ENCODE measurements at regions of chr18 and their contacts with region 1.

Region 1: GRCh38 chr18:23452728-23453679 is at the start of gene RIOK3:
- DNase-seq: peak; percentile 97 to 98
- ATAC-seq: peak; percentile 99
- H3K4me3 ChIP-seq: peak within 1 kb of the TSS; percentile 75 to 98 (median 92)
- H3K27ac ChIP-seq: peak within 1 kb of the TSS; percentile 52 to 96 (median 92)
- H3K4me1 ChIP-seq: peaks cover 7 to 57% (median 40%) of the 10 kb centered on the region in 9 donors
- H3K27me3 ChIP-seq: no peaks in the 10 kb centered on the region
- CTCF ChIP-seq: no peak
- total RNA-seq, gene RIOK3: 51.5 to 74.6 (median 63.5) TPM

Region 2: GRCh38 chr18:22207021-22207758 is 1245.8 kb before region 1 on chr18:
- intact Hi-C with region 1: loop called in 1 of 10 experiments (anchors 5 kb)
- DNase-seq: no peak
- ATAC-seq: peak in 7 of 8 donors; percentile 29 to 83 (median 56)
- H3K4me3 ChIP-seq: no peak overlapping the region
- H3K27ac ChIP-seq: peak overlapping the region in 8 of 10 donors; percentile 12 to 70 (median 51)
- H3K4me1 ChIP-seq: peaks cover 13 to 72% (median 48%) of the 10 kb centered on the region in 9 donors
- H3K27me3 ChIP-seq: no peaks in the 10 kb centered on the region
- CTCF ChIP-seq: no peak

Region 3: DNA sequence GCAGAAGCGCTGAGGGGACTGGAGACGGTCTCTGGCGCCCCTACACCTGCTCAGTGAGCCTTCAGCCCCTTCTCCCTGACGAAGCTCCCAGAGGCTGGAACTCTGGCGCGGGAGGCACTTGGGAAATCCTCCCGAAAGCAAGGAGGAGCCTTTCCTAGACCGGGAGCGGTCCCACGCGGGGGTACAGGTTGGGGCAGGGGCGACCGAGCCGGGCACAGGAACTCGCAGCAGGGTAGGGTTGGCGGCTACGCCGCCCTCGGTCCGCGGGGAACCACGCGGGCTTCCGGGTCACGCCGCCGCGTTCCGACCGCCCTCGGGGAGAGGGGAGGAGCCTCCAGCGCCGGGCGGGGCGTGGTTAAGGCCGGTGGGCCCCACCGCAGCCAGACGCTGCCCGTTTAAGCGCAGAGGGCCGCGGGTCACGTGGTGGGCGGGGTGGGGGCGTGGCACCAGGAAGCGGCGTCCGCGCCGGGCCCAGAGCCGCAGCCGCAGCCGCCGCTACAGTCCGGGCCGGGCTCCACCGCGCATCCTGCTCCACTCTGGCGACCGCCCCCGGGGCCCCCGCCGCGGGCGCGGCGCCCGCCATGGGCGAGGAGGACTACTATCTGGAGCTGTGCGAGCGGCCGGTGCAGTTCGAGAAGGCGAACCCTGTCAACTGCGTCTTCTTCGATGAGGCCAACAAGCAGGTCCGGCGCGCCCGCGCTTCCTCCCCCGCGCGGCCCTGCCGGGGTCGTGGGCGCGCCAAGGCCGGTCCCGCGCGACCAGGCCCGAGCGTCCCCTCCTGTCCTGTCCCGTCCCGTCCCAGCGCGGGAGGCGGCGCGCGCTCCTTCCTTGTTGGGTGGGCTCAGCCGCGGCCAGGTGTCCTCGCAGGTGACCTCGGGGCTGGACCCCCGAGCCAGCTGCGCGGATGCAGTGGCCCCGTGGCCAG is 50.3 kb after region 1 on chr18 and contains the start of gene RMC1:
- intact Hi-C with region 1: loop called in 4 of 10 experiments (anchors 1 to 5 kb)
- DNase-seq: peak; percentile 97 to 99
- ATAC-seq: peak; percentile 98 to 99 (median 99)
- H3K4me3 ChIP-seq: peak within 1 kb of the TSS; percentile 85 to 99 (median 96)
- H3K27ac ChIP-seq: peak within 1 kb of the TSS; percentile 57 to 96 (median 94)
- H3K4me1 ChIP-seq: peaks cover 0 to 44% (median 28%) of the 10 kb centered on the region in 9 donors
- H3K27me3 ChIP-seq: no peaks in the 10 kb centered on the region
- CTCF ChIP-seq: peak in 4 of 9 donors; percentile 10 to 33 (median 26)
- total RNA-seq, gene RMC1: 12.4 to 21.6 (median 14.5) TPM

Region 4: DNA sequence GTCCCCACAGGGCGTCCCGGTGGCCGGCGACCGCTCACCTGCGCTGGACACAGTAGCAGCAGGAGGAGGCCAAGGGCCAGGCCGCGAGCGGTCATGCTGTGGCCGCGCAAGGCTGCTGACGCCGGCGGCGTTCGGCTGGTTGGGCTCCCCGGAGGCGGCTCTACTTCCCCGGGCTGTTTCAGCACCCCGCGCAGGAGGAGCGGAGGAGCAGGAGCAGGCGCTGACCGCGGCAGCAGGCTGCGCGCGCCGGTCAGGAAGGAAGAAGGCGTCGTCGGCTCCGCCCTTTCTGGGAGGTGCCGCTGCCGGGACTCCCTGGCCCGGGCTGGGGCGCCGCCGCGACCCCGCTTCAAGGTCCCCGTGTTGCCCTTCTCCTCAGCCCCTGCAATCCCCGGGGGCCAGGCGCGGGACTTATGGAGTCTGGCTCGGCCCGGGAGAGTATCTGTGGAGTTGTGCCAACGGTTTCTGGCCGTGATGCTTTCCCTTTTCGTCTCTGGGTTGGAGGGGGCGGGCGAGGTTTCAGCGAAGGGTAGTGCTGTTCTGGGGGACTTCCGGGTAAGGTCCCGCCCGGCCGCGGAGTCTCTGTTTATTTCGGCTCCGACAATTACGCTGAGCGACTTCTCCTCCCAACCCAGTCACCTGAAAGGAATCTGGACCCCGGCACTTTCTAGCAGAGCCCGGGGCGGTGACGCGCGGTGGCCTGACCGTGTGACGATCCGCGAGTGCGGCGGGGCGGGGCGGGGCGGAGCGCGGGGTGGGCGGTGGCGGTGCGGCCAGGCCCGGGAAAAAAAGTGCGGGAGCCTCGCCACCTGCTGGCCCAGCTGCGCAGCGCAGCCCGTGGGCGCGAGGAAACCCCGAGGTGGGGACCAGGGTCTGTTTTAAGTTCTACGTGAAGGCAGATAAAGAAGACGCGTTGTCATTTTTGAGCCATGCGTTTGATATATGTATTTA is 133.5 kb after region 1 on chr18 and contains the start of gene NPC1:
- intact Hi-C with region 1: loop called in 1 of 10 experiments (anchors 5 kb)
- DNase-seq: peak; percentile 92 to 95
- ATAC-seq: peak; percentile 98 to 99 (median 99)
- H3K4me3 ChIP-seq: peak within 1 kb of the TSS; percentile 77 to 97 (median 91)
- H3K27ac ChIP-seq: peak within 1 kb of the TSS; percentile 94 to 100 (median 98)
- H3K4me1 ChIP-seq: peaks cover 0 to 46% (median 24%) of the 10 kb centered on the region in 9 donors
- H3K27me3 ChIP-seq: peaks cover 0 to 12% (median 0%) of the 10 kb centered on the region in 7 donors
- CTCF ChIP-seq: peak; percentile 90 to 100 (median 97)
- total RNA-seq, gene NPC1: 9.7 to 21.2 (median 13.3) TPM